ENCODE measurements at regions of chr17 and their contacts with region 1.

Region 1: DNA sequence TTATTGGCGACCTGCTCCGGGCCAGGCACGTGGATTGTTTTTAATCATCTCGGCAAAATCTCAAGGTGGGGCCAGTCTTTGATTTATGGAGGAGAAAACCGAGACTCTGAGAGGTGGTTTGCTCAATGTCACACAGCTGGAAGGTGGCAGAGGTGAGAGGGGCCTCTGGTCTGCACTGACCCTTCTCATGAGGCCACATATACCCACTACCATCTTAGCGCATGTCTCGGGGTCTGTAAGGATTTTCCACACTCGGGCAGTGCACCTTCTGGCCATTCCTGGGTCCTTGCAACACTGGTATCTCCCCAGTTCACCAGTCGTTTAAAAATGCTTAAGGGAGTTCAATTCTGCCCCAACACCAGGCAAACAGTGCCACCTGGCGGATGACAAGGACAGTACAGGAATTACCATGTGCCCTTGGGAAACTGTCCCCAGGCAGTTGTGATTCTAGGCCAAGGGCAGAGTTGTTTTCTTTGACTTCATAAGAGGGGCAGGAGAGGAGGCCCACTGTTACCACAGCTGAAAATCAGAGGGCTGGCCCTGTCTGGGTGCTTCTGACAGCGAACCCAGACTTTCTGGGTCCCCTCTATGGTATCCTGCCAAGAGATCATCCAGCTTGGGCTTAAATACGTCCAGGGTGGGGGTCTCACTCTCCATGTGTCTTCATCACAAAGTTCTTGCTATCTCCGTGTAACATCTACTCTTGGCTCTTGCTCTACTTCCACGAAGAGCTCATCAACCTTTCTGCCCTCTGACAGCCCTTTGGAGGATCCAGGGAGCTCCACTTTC is 39.4 kb upstream of the RAI1 start:
- DNase-seq: peak; percentile 83
- ATAC-seq: peak; percentile 88
- H3K4me3 ChIP-seq: no peak overlapping the region
- H3K4me3 Mint-ChIP-seq: no peak overlapping the region
- H3K27ac ChIP-seq: no peak overlapping the region
- H3K27ac Mint-ChIP-seq: no peak overlapping the region
- H3K4me1 ChIP-seq: no peaks in the 10 kb centered on the region
- H3K4me1 Mint-ChIP-seq: no peaks in the 10 kb centered on the region
- H3K27me3 ChIP-seq: peaks cover 0 to 2% (median 0%) of the 10 kb centered on the region in 4 experiments
- H3K27me3 Mint-ChIP-seq: peaks cover 15% of the 10 kb centered on the region
- CTCF ChIP-seq: peak; percentile 80

Region 2: DNA sequence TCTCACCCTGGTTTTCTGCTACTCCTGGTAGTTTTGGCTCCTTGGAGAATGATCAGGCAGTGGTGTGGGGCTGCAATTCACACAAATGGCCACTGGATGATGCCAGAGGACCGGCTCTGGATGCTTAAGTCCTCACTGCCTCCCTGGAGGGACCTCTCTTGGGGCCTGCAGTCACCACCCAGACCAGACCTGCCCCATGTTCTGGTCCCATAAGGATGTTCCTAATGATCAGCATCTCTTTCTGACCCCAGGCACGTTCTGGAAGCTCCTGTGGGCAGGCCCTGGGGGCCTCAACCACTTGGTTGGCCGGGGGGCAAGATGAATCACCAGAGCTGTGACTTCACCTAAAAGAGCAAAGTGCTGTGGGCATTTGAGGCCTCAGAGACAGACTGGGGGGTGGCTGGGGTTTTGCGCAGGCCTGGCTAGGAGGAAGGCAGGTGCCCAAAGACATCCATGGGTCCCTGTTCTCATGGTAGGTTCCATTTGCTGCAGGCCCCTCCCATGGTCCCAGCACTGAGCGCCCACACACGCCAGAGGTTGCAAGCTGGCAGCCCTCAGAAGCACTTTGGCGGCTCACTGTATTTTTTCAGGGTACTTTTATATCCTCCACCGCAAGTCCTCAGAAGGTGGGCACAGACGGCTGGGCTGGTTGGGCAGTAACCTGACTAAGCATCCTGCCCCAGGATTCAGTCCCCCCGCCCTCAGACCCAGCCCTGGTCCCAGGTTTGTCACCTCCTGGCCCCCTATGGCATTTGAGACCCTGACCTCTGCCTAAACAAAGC is 285.5 kb before region 1 on chr17:
- CTCF ChIA-PET with region 1: interaction called, 124 read pairs
- POLR2A ChIA-PET with region 1: no interaction called
- intact Hi-C with region 1: loop called (anchors 1 kb)
- DNase-seq: peak; percentile 79
- ATAC-seq: peak; percentile 87
- H3K4me3 ChIP-seq: no peak overlapping the region
- H3K4me3 Mint-ChIP-seq: no peak overlapping the region
- H3K27ac ChIP-seq: no peak overlapping the region
- H3K27ac Mint-ChIP-seq: no peak overlapping the region
- H3K4me1 ChIP-seq: peaks cover 3 to 7% of the 10 kb centered on the region in 2 donors
- H3K4me1 Mint-ChIP-seq: peaks cover 4% of the 10 kb centered on the region
- H3K27me3 ChIP-seq: no peaks in the 10 kb centered on the region
- H3K27me3 Mint-ChIP-seq: peaks cover 4% of the 10 kb centered on the region
- CTCF ChIP-seq: peak; percentile 93

Region 3: DNA sequence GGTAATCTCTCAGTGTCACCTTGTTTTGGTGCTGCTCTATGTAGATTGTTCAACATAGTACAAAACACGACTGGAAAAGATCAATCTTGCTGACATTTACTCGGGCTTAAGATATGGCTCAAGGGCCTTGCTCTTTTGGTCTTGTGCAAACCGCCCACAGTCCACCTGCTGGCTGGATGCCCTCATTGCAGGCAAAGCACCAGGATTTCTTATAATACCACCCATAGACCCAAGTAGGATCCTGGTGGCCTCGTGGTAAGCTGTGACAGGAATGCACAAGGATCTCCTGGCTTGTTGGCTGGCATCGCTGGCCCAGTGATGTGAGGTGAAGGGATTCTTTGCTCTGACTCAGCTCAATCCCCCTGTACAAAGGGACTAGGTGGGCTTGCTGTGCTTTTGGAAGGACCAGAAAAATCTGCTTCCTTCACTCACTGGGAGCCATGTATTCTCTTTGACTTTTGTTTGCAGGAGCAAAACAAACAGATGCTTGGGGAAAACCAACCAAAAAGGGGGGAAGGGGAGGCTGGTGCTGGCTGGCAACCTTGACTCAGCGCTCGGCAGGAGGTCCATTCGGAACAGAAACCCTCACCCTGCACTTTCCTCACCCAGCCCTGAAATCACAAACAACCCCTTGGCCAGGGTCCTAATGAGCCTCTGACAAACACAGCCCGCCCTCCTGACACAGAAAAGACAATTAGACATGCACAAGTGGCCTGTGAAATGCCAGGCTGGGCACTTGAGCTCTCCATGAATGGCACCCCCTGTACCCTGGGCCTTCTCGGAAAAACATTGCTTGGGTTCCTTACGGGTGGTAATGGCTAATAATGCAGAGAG is 201.6 kb before region 1 on chr17:
- CTCF ChIA-PET with region 1: interaction called, 5 read pairs
- POLR2A ChIA-PET with region 1: no interaction called
- intact Hi-C with region 1: loop called (anchors 2 kb)
- DNase-seq: peak; percentile 80
- ATAC-seq: peak; percentile 85
- H3K4me3 ChIP-seq: no peak overlapping the region
- H3K4me3 Mint-ChIP-seq: no peak overlapping the region
- H3K27ac ChIP-seq: no peak overlapping the region
- H3K27ac Mint-ChIP-seq: no peak overlapping the region
- H3K4me1 ChIP-seq: peaks cover 0 to 3% of the 10 kb centered on the region in 2 donors
- H3K4me1 Mint-ChIP-seq: peaks cover 2% of the 10 kb centered on the region
- H3K27me3 ChIP-seq: no peaks in the 10 kb centered on the region
- H3K27me3 Mint-ChIP-seq: peaks cover 4% of the 10 kb centered on the region
- CTCF ChIP-seq: peak; percentile 82

Region 4: GRCh38 chr17:17613708-17614114 is 28.1 kb before region 1 on chr17:
- CTCF ChIA-PET with region 1: interaction called, 13 read pairs
- POLR2A ChIA-PET with region 1: no interaction called
- intact Hi-C with region 1: no loop called
- DNase-seq: peak; percentile 57
- ATAC-seq: peak; percentile 66
- H3K4me3 ChIP-seq: no peak overlapping the region
- H3K4me3 Mint-ChIP-seq: no peak overlapping the region
- H3K27ac ChIP-seq: no peak overlapping the region
- H3K27ac Mint-ChIP-seq: no peak overlapping the region
- H3K4me1 ChIP-seq: peaks cover 0 to 4% of the 10 kb centered on the region in 2 donors
- H3K4me1 Mint-ChIP-seq: no peaks in the 10 kb centered on the region
- H3K27me3 ChIP-seq: no peaks in the 10 kb centered on the region
- H3K27me3 Mint-ChIP-seq: no peaks in the 10 kb centered on the region
- CTCF ChIP-seq: peak; percentile 79

Region 5: GRCh38 chr17:17628388-17629008 is 13.3 kb before region 1 on chr17:
- CTCF ChIA-PET with region 1: interaction called, 19 read pairs
- POLR2A ChIA-PET with region 1: no interaction called
- intact Hi-C with region 1: no loop called
- DNase-seq: peak; percentile 63
- ATAC-seq: peak; percentile 85
- H3K4me3 ChIP-seq: peak overlapping the region; percentile 25 to 77 (median 45)
- H3K4me3 Mint-ChIP-seq: peak overlapping the region; percentile 90
- H3K27ac ChIP-seq: peak overlapping the region; percentile 51 to 71
- H3K27ac Mint-ChIP-seq: peak overlapping the region; percentile 91
- H3K4me1 ChIP-seq: peaks cover 4 to 8% of the 10 kb centered on the region in 2 donors
- H3K4me1 Mint-ChIP-seq: peaks cover 8% of the 10 kb centered on the region
- H3K27me3 ChIP-seq: no peaks in the 10 kb centered on the region
- H3K27me3 Mint-ChIP-seq: no peaks in the 10 kb centered on the region
- CTCF ChIP-seq: no peak

Region 6: DNA sequence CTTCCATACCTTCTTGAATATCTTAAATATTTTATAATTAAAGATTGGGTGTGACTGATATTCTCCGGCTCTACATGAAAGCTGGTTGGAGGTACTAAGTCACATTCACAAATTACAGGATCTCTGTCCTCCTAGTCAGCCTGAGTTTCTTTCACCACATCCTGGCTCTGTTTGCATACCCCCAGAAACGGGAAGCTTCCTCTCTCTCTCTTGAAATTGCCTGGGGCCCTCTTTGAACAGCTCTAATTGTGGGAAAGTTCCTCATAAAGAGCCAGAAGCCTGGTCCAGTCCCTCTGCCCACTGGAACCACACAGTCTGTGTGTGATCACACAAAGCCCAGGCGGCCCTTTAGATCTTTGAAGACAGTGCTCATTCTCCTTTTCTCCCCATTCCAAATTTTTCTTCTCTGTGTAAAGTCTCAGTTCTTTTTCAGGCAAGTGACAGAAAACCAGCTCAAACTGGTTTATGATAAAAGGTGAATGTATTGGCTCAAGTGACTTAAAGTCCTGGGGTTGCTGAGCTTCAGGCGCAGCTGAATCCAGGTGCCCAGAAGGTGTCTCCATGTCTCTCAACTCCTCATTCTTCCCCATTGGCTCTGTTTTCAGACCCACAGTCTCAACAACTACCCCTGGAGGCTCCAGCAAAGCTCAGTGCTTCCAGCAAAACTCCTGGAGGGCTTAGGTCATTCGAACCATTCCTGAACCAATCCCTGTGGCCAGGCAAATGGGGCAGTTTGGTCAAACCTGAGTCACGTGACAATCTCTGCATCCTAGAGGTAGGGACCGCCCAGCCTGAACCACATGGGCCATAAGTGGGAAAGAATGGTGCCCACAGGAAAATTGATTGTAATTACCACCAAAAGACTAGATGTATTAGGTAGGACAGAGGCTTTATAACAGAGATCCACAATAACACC is 30.9 kb after region 1 on chr17:
- CTCF ChIA-PET with region 1: interaction called, 11 read pairs
- POLR2A ChIA-PET with region 1: no interaction called
- intact Hi-C with region 1: no loop called
- DNase-seq: no peak
- ATAC-seq: no peak
- H3K4me3 ChIP-seq: no peak overlapping the region
- H3K4me3 Mint-ChIP-seq: no peak overlapping the region
- H3K27ac ChIP-seq: no peak overlapping the region
- H3K27ac Mint-ChIP-seq: no peak overlapping the region
- H3K4me1 ChIP-seq: peaks cover 7 to 19% of the 10 kb centered on the region in 2 donors
- H3K4me1 Mint-ChIP-seq: peaks cover 29% of the 10 kb centered on the region
- H3K27me3 ChIP-seq: no peaks in the 10 kb centered on the region
- H3K27me3 Mint-ChIP-seq: no peaks in the 10 kb centered on the region
- CTCF ChIP-seq: no peak

Region 7: DNA sequence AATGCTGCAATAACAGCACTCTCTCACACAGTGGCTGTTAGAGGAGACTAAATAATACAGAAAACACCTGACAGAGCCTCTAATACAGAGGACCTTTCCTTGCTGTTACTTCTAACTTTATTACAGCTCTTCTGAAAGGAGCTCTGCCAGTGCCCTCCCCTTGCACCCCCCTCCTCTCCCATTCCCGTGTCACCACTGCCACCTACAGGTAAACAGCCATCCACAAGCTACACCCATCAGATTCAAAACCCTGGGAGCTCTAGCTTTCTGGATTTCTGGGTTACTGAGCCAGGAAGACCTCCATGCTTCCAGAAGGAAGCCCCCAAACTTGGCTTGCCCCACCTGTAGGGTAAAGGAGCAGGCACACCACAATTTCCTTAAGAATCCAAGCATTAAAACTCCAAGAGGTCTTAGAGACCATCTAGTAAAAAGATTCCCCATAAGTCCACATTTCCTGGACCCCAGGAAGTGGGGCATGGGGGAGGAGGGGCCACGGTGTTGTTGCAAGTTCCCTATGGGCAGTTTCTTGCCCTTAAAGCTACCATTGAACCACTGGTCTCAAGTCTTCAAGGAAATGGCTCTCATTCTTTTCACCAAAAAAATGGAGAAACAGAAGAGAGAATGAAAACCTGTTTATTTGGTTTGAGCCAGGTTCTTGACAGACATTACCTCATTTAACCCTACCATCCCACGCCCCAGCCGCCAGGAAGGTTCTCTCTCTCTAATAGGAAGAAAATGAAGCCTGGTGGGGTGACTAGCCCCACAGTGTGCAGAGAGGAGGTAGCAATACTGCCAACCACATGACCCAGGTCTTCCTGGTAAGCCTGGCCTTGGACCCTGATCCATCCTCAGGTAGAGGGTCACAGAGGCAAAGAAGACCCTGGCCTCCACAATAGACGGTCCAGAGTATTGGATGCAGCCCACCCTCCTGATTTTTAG is 277.6 kb after region 1 on chr17:
- CTCF ChIA-PET with region 1: interaction called, 15 read pairs
- POLR2A ChIA-PET with region 1: no interaction called
- intact Hi-C with region 1: no loop called
- DNase-seq: peak; percentile 67
- ATAC-seq: peak; percentile 69
- H3K4me3 ChIP-seq: no peak overlapping the region
- H3K4me3 Mint-ChIP-seq: no peak overlapping the region
- H3K27ac ChIP-seq: no peak overlapping the region
- H3K27ac Mint-ChIP-seq: no peak overlapping the region
- H3K4me1 ChIP-seq: no peaks in the 10 kb centered on the region
- H3K4me1 Mint-ChIP-seq: no peaks in the 10 kb centered on the region
- H3K27me3 ChIP-seq: no peaks in the 10 kb centered on the region
- H3K27me3 Mint-ChIP-seq: no peaks in the 10 kb centered on the region
- CTCF ChIP-seq: peak; percentile 71

Measured in B cell (primary cell).